ENCODE measurements at regions of chr11 and their contacts with region 1.

Region 1: DNA sequence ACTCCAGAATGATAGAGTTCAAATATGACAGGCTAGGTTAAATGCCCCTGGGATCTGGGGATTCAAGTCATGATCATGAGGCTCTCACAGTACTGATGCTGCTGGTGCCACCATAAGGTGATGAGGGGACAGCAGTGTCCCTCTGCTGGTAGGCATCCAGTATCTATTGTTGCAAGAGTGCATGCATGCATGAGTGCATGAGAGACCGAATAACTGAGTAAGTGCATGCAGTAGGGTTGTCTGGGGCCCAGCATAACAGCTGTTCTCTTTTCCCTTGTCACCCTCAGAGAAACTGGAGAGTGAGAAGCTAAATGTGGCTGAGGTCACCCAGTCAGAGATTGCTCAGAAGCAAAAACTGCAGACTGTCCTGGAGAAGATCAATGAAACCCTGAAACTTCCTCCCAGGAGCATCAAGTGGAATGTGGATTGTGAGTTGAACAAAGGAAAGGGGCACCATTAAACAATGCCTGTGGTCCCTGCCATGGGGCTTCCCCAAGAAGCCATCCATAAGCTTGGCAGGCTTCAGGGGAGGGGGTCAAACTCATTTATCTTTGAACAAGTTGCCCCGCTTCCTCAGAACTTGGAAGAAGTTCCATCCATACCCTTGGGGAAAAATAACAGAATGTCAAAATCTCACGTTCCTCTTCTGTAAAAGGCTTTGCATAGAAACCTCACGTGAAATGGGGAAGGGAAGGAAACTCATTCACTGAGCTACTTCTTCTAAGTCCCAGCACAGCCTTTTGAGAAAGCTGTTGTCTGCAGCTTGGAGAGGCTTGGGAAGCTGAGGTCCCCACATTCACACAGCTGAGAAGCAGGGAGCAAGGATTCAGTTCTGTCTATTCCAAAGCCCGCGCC is 119.0 kb downstream of the PARVA start:
- DNase-seq: no peak
- ATAC-seq: no peak
- H3K4me3 ChIP-seq: no peak overlapping the region
- H3K27ac ChIP-seq: no peak overlapping the region
- H3K4me1 ChIP-seq: peaks cover 1% of the 10 kb centered on the region
- H3K27me3 ChIP-seq: no peaks in the 10 kb centered on the region

Region 2: DNA sequence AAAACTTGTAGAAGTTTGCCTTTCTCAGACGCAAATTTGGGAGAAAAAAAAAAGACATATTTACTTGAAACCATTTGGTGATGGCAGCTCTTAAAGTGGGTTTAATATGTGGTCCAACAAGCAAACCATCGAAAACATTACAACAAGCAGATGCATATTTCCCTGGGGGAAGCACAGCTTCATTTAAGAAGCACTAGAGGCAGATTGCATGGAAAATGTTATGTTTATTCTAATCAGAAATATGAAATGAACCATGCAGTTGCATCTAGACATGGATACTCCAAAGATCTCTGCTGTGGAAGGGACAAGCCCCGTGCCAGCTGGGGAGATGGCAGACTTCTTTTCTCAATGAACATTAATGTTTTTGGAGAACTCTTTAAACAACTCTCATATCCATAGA is 176.4 kb before region 1 on chr11:
- intact Hi-C with region 1: loop called in 1 of 4 experiments (anchors 10 kb)
- DNase-seq: no peak
- ATAC-seq: no peak
- H3K4me3 ChIP-seq: no peak overlapping the region
- H3K27ac ChIP-seq: no peak overlapping the region
- H3K4me1 ChIP-seq: peaks cover 4% of the 10 kb centered on the region
- H3K27me3 ChIP-seq: no peaks in the 10 kb centered on the region

Measured in right cardiac atrium (tissue), 5 donors.